Left ventricle myocardium superior (tissue), 1 donor: ENCODE measurements at regions of chr2 and their contacts with region 1.

Region 1: GRCh38 chr2:120343433-120344105 is 2.4 kb upstream of the INHBB start:
- DNase-seq: peak; percentile 90
- ATAC-seq: peak; percentile 88

Region 2: GRCh38 chr2:120261387-120262006 is 82.1 kb before region 1 on chr2:
- intact Hi-C with region 1: no loop called
- DNase-seq: no peak
- ATAC-seq: no peak

Region 3: DNA sequence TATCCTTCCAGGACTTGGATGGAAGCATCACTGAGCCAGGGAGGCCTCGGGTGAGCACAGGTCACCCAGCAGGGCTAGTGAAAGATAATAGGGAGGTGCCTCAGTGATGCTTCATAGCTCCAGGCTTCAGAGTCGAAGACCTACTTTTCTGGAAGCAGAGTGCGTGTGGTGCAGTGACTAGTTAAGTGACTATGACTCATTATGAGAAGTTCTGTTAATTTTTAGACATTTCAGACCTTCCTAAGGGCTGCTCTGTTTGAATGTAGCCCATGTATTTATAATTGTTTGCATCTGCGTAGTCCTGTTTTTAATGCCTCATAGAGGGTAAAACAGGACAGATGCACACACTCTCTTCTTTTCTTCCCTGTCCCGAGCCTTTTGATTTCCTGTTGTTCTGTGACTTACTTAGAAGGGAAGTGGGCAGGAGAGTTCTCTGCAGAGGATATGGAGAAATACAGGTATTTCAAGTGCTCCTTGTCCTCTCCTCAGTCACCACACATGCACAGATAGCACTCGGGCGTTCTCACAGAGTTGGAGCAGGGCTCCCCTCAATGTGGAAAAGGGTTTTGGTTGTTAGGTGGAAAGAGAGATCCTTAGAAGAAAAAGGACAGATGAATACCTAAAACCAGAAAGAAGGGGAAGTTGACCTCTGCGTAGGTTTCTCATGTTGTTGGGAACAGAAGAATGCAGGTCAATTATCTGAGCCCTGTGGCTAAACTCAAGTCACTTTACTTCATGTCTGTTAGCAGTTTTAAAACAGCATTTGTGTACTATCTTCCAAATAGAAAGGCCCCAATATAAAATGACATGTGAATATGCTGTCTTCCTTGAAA is 56.2 kb before region 1 on chr2:
- intact Hi-C with region 1: no loop called
- DNase-seq: no peak
- ATAC-seq: no peak

Region 4: DNA sequence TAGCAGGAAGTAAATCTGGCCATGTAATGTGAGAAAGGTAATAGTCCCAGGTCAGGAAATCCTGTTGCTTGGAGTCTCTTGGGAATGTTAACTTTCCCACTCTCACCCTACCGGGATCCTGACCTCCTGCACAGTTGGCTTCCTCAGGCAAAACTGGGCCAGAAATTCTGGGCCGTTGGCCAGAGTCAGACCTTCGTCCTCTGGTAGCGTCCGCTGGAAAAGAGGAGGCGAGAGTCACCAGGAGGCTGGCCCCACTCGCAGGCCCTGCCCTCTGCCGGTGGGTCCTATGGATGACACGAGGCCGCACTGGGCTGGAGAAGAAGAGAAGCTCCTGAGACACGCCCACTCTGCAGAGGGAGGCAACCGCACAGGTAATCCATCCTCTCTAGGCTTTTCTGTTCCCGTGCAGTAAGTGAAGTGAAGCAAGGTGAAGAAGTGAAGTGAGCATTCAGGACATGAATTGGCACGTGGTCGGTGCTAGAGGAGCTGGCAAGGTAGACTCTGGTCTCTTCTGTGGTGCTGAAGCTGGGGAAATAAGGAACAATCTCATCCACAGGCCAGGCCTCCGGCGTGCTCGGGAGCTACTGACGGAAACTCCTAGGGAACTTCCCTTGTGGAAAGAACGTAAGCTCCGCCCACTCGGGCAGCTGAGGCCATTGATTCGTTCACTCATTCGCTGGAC is 209.4 kb after region 1 on chr2:
- intact Hi-C with region 1: loop called (anchors 10 kb)
- DNase-seq: peak; percentile 92
- ATAC-seq: peak; percentile 89

Region 5: DNA sequence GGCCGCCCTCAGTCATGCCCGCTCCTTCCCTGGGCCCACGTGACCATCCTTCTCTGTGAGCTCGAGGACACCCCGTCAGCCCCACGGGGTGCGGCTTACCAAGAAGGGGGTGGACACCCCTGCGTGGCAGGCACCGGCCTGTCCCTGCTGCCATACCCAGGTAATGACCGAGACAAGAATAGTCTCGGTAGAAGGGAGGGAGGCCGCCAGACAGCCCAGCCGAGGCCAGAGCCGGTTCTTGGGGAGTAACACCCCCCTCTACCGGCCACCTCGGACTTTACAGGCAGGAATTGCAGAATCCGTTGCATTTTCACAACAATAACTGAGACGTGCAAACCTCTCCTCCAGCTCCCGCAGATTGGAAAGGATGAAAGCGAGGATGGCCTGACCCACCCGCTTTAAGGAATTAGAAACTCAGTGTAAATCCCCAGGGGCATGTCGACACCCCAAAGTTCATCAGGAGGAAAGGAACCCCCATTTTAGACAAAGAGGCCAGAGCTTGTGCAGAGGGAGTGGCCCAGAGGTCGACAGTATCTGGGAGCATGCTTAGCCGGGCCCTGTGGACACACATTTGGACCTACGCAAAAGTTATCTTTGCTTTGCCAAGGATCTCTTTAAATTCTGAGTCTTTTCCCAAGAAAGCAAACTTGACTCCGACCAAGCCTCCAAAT is 332.0 kb after region 1 on chr2:
- intact Hi-C with region 1: loop called (anchors 5 kb)
- DNase-seq: peak; percentile 76
- ATAC-seq: peak; percentile 67